Transverse colon (tissue), 4 donors: ENCODE measurements at regions of chr1 and their contacts with region 1.

Region 1: GRCh38 chr1:109404838-109405237 is 7.1 kb upstream of the SORT1 start:
- DNase-seq: no peak
- H3K4me3 ChIP-seq: no peak overlapping the region
- H3K27ac ChIP-seq: no peak overlapping the region
- H3K4me1 ChIP-seq: no peaks in the 10 kb centered on the region
- H3K27me3 ChIP-seq: no peaks in the 10 kb centered on the region
- CTCF ChIP-seq: no peak
- EP300 ChIP-seq: no peak
- POLR2A ChIP-seq: no peak

Region 2: DNA sequence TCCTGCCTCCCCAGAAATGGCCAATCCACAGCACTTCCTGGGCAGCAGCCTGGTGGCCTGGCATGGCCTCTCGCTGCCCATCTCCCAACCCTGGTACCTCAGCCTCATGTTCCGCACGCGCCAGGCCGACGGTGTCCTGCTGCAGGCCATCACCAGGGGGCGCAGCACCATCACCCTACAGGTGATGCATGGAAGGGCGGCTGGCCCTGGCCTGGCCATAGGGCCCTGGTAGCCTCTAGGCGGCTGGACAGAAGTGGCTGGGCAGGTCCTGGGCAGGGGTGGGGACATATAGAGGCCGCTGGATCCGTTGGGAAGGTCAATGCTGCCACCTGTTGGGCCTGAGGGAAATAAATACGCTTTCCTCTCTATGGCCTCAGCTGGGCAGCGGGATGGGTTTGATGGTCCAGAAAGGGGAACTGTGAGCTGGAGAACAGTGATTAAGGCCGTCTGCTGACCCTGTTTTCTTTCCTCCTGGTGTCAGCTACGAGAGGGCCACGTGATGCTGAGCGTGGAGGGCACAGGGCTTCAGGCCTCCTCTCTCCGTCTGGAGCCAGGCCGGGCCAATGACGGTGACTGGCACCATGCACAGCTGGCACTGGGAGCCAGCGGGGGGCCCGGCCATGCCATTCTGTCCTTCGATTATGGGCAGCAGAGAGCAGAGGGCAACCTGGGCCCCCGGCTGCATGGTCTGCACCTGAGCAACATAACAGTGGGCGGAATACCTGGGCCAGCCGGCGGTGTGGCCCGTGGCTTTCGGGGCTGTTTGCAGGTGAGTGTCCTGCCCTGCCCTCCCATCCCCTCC is 141.0 kb before region 1 on chr1:
- in situ Hi-C with region 1: loop called in 1 of 4 experiments (anchors 5 kb)
- intact Hi-C with region 1: loop called (anchors 5 kb)
- DNase-seq: peak; percentile 82
- H3K4me3 ChIP-seq: no peak overlapping the region
- H3K27ac ChIP-seq: no peak overlapping the region
- H3K4me1 ChIP-seq: no peaks in the 10 kb centered on the region
- H3K27me3 ChIP-seq: no peaks in the 10 kb centered on the region
- CTCF ChIP-seq: peak; percentile 91 to 100 (median 96)
- EP300 ChIP-seq: no peak
- POLR2A ChIP-seq: no peak

Region 3: DNA sequence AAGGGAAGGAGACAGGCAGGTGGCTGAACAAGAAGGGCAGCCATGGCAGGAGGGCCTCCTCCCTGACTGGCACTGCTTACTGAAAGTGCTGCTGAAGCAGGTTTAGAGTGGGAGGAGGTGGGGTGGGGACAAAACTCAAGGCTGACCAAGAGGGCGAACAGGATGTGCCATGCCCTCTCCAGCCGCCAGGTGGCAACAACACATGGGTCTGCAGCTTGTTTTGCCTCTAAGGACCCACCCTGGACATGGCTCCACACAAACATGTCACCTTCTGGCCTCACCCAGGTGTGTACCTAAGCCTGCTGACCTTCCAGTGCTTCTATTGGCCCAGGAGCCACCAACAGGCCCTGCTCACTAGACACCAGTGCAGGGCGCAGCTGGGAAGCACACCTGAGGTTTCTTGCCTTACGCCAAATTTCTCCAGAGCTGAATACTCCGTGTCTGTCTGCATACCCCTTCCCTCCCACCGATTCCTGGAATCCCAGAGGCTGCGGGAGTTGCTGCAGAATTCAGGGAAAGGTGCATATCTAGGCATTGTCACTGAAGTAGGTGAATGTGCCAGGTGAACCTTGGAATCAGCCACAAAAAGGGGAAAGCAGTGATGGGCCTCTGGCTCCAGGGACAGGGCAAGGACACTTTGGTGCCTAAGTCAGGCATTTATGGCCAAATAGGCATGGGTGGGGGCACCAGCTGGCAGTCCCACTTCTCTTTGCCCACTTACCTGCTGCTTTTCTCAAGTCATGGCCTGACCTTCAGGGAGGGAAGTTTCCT is 127.2 kb before region 1 on chr1:
- in situ Hi-C with region 1: loop called in 3 of 4 experiments (anchors 5 to 25 kb)
- intact Hi-C with region 1: no loop called
- DNase-seq: peak; percentile 90
- H3K4me3 ChIP-seq: no peak overlapping the region
- H3K27ac ChIP-seq: peak overlapping the region; percentile 27 to 66 (median 52)
- H3K4me1 ChIP-seq: peaks cover 10 to 42% (median 31%) of the 10 kb centered on the region in 4 donors
- H3K27me3 ChIP-seq: no peaks in the 10 kb centered on the region
- CTCF ChIP-seq: peak; percentile 91 to 98 (median 93)
- EP300 ChIP-seq: no peak
- POLR2A ChIP-seq: peak; percentile 15

Region 4: DNA sequence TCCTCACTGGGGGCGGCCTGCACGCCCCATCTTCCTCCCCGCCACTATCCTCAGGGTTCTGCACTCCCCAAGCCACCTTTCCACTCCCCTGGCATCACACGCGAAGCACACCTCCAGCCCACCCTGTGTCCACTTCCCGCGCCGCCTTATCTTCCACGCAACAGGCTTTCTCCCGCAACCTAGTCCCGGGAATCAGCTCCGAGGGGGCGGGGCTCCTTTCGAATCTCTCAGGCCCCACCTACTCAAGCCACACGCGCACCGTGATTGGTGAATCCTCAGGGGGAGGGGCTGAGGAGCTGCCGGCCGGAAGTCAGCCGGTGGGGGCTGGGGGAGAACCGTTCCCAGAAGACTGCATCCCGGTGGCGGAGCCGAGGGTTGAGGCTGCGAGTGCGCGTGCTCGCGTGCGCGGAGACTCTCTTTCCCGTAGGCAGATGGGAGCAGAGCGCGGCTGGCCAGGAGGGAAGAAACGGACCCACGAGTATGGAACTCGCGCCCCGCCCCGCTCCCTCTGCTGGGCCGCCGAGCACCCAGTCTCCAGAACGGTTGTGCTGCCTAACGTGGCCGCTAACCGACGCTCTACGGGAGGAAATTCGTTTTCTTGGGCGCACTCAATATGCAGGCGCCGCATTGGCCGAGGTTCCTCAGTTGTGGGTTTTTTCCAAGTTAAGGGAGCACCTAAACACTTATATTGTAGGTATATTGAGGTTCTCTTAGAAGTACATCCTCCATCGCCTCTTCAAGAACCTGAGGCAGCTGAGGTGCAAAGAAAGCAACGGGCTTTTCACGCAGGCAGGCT is 121.7 kb before region 1 on chr1 and contains the start of gene PSRC1:
- in situ Hi-C with region 1: loop called in 3 of 4 experiments (anchors 5 to 25 kb)
- intact Hi-C with region 1: no loop called
- DNase-seq: peak; percentile 97
- H3K4me3 ChIP-seq: peak within 1 kb of the TSS; percentile 39 to 52 (median 52)
- H3K27ac ChIP-seq: peak within 1 kb of the TSS; percentile 87 to 96 (median 90)
- H3K4me1 ChIP-seq: peaks cover 8 to 23% (median 19%) of the 10 kb centered on the region in 4 donors
- H3K27me3 ChIP-seq: no peaks in the 10 kb centered on the region
- CTCF ChIP-seq: peak; percentile 35 to 90 (median 65)
- EP300 ChIP-seq: no peak
- POLR2A ChIP-seq: peak; percentile 72
- total RNA-seq, gene PSRC1: 1.9 to 18.0 (median 4.4) TPM

Region 5: DNA sequence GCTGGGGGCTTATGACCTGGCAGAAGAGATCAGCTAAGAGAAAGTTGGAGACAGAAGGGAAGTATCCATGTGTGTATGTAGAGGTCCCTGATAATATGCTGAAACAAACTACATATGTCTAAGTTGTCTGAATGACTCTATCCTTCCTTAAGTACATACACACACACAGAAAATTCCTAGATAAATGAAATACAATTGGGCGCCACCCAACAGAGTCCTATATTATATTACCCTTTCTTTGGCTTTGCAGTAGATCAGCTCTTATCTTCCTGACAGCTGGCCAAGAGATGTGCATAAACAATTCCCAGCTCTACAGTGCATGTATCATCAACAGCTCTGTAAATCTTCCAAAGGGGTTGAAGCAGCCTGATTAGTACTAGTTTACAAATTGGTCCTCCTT is 47.2 kb before region 1 on chr1:
- in situ Hi-C with region 1: no loop called
- intact Hi-C with region 1: loop called (anchors 10 kb)
- DNase-seq: no peak
- H3K4me3 ChIP-seq: no peak overlapping the region
- H3K27ac ChIP-seq: no peak overlapping the region
- H3K4me1 ChIP-seq: peaks cover 0 to 22% (median 7%) of the 10 kb centered on the region in 4 donors
- H3K27me3 ChIP-seq: no peaks in the 10 kb centered on the region
- CTCF ChIP-seq: no peak
- EP300 ChIP-seq: no peak
- POLR2A ChIP-seq: no peak

Region 6: DNA sequence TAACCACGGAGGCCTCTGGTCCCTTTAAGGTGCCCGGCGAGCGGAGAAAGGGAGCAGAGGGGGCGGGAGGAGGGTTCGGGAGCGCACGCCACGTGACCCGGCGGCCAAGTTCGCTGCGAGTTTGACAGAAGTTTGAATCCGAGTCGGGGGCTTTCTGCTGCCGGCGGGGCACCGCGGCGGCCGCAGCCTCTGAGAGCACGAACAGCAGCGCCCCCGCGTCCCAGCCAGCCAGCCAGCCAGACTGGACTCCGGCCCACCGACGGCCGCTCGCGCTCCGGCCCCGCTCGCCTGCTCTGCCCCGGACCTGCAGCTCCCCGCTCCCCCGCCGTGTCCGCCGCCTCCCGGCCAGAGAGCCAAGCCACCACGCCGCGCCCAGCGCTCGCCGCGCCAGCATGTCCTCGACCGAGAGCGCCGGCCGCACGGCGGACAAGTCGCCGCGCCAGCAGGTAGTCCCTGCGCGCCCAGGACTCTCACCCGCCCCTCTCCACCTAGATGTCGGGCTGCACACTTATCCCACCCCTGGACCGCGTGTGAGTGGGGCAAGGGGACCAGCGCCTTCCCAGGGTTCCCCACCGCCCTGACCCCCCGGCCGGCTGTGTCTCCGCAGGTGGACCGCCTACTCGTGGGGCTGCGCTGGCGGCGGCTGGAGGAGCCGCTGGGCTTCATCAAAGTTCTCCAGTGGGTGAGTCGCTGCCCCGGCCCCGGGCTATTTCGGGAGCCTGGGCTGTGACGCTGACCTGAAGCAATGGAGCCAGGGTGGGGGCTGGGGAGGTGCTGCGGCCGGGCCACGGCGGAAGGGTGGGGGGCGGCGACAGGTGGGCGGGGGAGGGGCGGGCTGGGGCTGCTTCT is 61.8 kb after region 1 on chr1 and contains the start of gene SYPL2:
- in situ Hi-C with region 1: no loop called
- intact Hi-C with region 1: no loop called
- DNase-seq: peak; percentile 51
- H3K4me3 ChIP-seq: peak within 1 kb of the TSS; percentile 34 to 58 (median 52)
- H3K27ac ChIP-seq: peak within 1 kb of the TSS; percentile 54 to 85 (median 70)
- H3K4me1 ChIP-seq: peaks cover 0 to 25% (median 12%) of the 10 kb centered on the region in 4 donors
- H3K27me3 ChIP-seq: peaks cover 92% of the 10 kb centered on the region
- CTCF ChIP-seq: no peak
- EP300 ChIP-seq: no peak
- POLR2A ChIP-seq: no peak
- total RNA-seq, gene SYPL2: 0.40 to 4.1 (median 0.44) TPM

Region 7: DNA sequence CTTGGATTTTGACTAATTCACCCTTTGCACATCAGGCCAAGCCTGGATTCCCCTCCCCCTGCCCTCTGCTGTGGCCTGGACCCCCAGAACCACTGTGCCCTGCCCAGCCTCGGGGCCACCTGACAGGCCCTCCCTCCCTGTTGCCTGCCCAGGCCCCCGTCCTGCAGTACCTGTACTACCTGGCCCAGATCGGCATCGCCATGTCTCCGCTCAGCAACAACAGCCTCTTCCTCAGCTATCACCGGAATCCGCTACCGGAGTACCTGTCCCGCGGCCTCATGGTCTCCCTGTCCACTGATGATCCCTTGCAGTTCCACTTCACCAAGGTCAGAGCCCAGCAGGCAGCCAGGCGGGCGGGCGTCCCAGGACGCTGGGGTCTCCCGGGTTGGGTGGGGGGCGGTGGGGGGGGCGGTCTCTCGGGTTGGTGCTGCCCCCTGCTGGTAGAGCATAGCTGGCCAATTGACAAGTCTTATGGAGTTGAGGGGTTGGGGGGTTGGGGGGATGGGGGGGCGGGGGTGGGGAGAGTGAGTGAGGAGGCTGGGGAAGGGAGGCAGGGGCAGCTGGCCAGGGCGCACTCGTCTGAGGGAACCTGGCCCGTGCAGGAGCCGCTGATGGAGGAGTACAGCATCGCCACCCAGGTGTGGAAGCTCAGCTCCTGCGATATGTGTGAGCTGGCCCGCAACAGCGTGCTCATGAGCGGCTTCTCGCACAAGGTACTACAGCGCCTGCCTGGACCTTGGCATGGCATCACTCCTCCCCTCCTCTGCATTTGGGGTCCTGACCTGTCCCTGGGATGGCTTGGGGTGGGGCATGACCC is 225.5 kb after region 1 on chr1:
- in situ Hi-C with region 1: no loop called
- intact Hi-C with region 1: no loop called
- DNase-seq: no peak
- H3K4me3 ChIP-seq: no peak overlapping the region
- H3K27ac ChIP-seq: no peak overlapping the region
- H3K4me1 ChIP-seq: peaks cover 3 to 20% (median 10%) of the 10 kb centered on the region in 4 donors
- H3K27me3 ChIP-seq: no peaks in the 10 kb centered on the region
- CTCF ChIP-seq: peak in 3 of 5 experiments; percentile 39 to 48 (median 45)
- EP300 ChIP-seq: no peak
- POLR2A ChIP-seq: no peak